ENCODE measurements at regions of chr2 and their contacts with region 1.

Region 1: DNA sequence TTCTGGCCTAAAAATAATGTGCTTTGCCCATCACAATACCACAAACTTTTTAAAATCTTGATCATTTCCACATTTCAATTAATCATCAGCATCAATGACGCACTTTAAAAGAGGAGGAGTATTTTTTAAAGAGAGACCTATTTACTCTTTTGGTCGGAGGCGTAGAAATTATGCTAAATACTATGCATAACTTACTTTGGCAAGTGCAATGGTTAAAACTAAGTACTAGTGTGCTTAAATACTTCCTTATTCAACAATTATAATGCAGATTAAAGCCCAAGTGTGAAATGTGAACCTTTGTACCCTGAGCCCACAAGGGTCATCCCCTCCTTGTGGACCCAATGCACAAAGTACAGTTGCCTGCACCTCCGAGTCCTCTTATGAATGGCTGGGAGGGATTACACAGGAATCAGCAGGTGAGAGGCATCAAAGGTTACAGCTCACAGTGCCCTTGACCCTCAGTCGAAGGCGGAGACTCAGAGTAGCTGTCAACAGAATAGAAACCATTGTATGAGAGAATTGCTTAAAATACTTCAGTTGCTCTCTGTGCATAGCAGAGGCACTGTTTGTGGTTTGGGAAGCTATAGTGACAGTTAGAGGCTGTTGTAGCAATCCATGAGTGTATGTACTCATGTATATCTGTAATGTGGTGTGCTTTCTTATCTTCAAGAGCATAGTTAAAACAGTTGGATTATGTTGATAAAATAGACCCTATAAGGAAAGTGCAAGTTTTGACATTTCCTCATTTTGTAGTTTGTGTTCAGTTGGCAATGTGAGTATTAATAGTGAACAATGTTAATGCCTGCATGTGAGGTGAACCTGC is 151.7 kb upstream of the ITGA4 start:
- DNase-seq: peak; percentile 68
- H3K4me3 Mint-ChIP-seq: peak overlapping the region; percentile 61
- H3K27ac Mint-ChIP-seq: peak overlapping the region; percentile 91
- H3K4me1 Mint-ChIP-seq: peaks cover 64% of the 10 kb centered on the region
- H3K27me3 Mint-ChIP-seq: no peaks in the 10 kb centered on the region

Region 2: GRCh38 chr2:180006781-180007579 is 1298.5 kb before region 1 on chr2 and contains the start of gene CWC22:
- CTCF ChIA-PET with region 1: no interaction called
- intact Hi-C with region 1: loop called (anchors 10 kb)
- DNase-seq: peak; percentile 93
- H3K4me3 Mint-ChIP-seq: peak within 1 kb of the TSS; percentile 92
- H3K27ac Mint-ChIP-seq: peak within 1 kb of the TSS; percentile 100
- H3K4me1 Mint-ChIP-seq: peaks cover 36% of the 10 kb centered on the region
- H3K27me3 Mint-ChIP-seq: no peaks in the 10 kb centered on the region
- total RNA-seq, gene CWC22: 20.4 TPM

Region 3: DNA sequence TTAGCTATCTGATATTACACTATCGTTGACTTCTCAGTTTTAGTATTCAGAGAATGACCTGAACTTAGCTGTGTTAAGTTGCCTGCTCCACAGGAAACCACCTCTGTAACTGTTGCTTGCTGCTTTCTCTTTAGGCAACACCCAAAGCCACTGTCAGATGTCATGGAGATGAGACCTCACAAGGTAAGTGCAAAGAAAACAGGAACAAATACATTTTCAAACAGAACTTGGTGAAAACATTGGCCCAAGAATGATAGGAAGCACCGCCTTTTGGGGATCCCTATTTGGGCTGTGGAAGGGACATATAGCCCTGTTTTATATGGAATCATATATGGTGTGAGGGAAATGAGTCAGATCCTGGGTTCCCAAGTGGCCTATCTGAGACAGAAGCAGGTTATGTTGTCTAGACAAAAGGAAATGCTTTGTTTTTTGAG is 181.7 kb before region 1 on chr2:
- CTCF ChIA-PET with region 1: no interaction called
- intact Hi-C with region 1: loop called (anchors 1 kb)
- DNase-seq: peak; percentile 65
- H3K4me3 Mint-ChIP-seq: peak overlapping the region; percentile 65
- H3K27ac Mint-ChIP-seq: peak overlapping the region; percentile 89
- H3K4me1 Mint-ChIP-seq: peaks cover 54% of the 10 kb centered on the region
- H3K27me3 Mint-ChIP-seq: no peaks in the 10 kb centered on the region

Region 4: GRCh38 chr2:181178823-181179412 is 126.6 kb before region 1 on chr2:
- CTCF ChIA-PET with region 1: no interaction called
- intact Hi-C with region 1: loop called (anchors 1 kb)
- DNase-seq: peak; percentile 61
- H3K4me3 Mint-ChIP-seq: no peak overlapping the region
- H3K27ac Mint-ChIP-seq: peak overlapping the region; percentile 5
- H3K4me1 Mint-ChIP-seq: peaks cover 48% of the 10 kb centered on the region
- H3K27me3 Mint-ChIP-seq: no peaks in the 10 kb centered on the region

Region 5: GRCh38 chr2:181289698-181290097 is 15.8 kb before region 1 on chr2:
- CTCF ChIA-PET with region 1: no interaction called
- intact Hi-C with region 1: loop called (anchors 1 kb)
- DNase-seq: no peak
- H3K4me3 Mint-ChIP-seq: no peak overlapping the region
- H3K27ac Mint-ChIP-seq: no peak overlapping the region
- H3K4me1 Mint-ChIP-seq: peaks cover 29% of the 10 kb centered on the region
- H3K27me3 Mint-ChIP-seq: no peaks in the 10 kb centered on the region

Region 6: GRCh38 chr2:181354626-181355025 is 49.1 kb after region 1 on chr2:
- CTCF ChIA-PET with region 1: no interaction called
- intact Hi-C with region 1: no loop called
- DNase-seq: no peak
- H3K4me3 Mint-ChIP-seq: no peak overlapping the region
- H3K27ac Mint-ChIP-seq: no peak overlapping the region
- H3K4me1 Mint-ChIP-seq: peaks cover 11% of the 10 kb centered on the region
- H3K27me3 Mint-ChIP-seq: no peaks in the 10 kb centered on the region

Region 7: DNA sequence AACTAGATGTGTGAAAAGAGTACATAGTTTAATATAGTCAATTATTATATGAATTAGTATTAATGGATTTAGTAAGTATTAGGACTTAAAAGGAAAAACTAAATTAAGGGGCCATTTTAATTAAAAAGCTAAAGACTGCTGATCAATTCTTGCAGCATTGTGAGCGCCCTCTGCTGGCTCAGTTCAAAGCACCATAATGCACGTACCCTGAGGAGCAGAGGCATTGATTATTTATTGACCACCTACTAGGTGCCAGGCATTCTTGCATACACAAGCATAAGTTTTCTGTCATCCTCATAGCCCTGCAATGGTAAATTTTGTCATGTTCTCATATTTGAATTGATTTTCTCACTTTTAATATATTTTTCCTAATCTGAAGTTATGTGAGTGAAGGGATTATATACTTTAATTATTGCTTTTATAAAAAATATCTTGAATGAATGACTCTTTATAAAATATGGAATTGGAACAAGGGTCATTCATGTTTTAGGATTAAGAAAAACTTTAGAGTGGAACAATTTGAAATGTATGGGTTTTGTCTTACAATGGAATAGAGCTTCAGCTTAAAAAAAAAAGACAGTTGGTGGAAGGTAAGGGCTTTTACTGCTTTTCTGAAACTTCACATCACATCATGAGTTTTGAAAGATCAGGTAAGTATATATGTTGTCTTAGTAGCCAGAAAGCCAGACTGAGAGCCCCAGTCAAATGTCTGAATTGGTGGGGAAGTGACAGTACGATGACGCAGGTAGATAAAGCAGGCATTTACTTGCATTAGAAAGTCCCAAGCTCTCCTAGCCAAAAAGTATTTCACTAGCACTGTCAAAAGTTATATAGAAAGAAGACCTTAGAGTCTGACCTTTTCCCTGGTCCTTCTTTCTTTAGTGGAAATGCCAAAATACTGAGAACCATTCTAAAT is 161.4 kb after region 1 on chr2:
- CTCF ChIA-PET with region 1: interaction called, 14 read pairs
- intact Hi-C with region 1: loop called (anchors 1 kb)
- DNase-seq: peak; percentile 92
- H3K4me3 Mint-ChIP-seq: no peak overlapping the region
- H3K27ac Mint-ChIP-seq: peak overlapping the region; percentile 54
- H3K4me1 Mint-ChIP-seq: peaks cover 86% of the 10 kb centered on the region
- H3K27me3 Mint-ChIP-seq: no peaks in the 10 kb centered on the region

Region 8: GRCh38 chr2:181715033-181715630 is 409.6 kb after region 1 on chr2:
- CTCF ChIA-PET with region 1: no interaction called
- intact Hi-C with region 1: loop called (anchors 1 kb)
- DNase-seq: peak; percentile 89
- H3K4me3 Mint-ChIP-seq: no peak overlapping the region
- H3K27ac Mint-ChIP-seq: no peak overlapping the region
- H3K4me1 Mint-ChIP-seq: no peaks in the 10 kb centered on the region
- H3K27me3 Mint-ChIP-seq: no peaks in the 10 kb centered on the region